ENCODE measurements at regions of chr18 and their contacts with region 1.

Region 1: GRCh38 chr18:3541549-3542386 is 91.8 kb downstream of the TGIF1 start:
- DNase-seq: no peak
- H3K4me3 Mint-ChIP-seq: peak overlapping the region; percentile 34
- H3K27ac Mint-ChIP-seq: peak overlapping the region; percentile 77
- H3K4me1 Mint-ChIP-seq: peaks cover 12% of the 10 kb centered on the region
- H3K27me3 Mint-ChIP-seq: peaks cover 10% of the 10 kb centered on the region

Region 2: GRCh38 chr18:3261371-3262246 is 280.2 kb before region 1 on chr18 and contains the start of gene MYL12B:
- intact Hi-C with region 1: loop called (anchors 5 kb)
- DNase-seq: peak; percentile 75
- H3K4me3 Mint-ChIP-seq: peak within 1 kb of the TSS; percentile 93
- H3K27ac Mint-ChIP-seq: peak within 1 kb of the TSS; percentile 98
- H3K4me1 Mint-ChIP-seq: peaks cover 82% of the 10 kb centered on the region
- H3K27me3 Mint-ChIP-seq: no peaks in the 10 kb centered on the region
- total RNA-seq, gene MYL12B: 234 and 235 TPM in 2 replicates

Region 3: GRCh38 chr18:3297025-3297984 is 244.5 kb before region 1 on chr18:
- intact Hi-C with region 1: loop called (anchors 5 kb)
- DNase-seq: peak; percentile 89
- H3K4me3 Mint-ChIP-seq: peak overlapping the region; percentile 91
- H3K27ac Mint-ChIP-seq: peak overlapping the region; percentile 82
- H3K4me1 Mint-ChIP-seq: peaks cover 15% of the 10 kb centered on the region
- H3K27me3 Mint-ChIP-seq: peaks cover 33% of the 10 kb centered on the region

Region 4: DNA sequence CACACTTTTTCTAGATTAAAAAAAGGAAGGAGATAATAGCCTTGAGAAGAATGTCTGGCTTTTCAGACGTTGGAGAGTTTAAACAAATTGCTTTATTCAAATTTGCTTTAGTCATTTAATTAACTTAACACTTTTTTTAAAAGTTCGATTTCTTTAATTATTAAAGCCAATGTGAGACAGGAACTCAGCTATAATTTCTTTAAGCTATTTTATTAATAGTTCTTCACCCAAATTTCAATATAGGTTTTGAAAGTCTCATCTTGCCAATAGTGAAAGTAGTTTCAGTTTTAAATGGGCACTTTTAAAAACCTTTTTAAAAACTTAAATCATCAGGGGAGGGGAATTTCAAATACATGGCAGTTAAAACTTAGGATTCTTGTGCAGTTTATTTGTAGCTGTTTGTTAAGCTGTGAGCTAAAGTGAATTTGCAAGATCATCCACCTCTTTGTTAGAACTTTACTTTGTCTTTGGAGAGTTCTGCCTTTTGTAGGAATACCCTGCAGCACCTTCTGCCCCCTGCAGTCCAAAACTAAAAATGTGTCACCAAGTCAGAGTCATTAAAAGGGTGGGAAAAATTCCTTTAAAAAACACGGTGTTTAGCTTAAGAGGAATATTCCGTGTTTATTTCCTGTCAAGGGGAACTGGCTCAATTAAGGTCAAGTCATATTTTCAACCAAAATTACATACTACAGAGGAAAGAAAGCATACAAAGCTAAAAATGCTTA is 87.2 kb before region 1 on chr18:
- intact Hi-C with region 1: loop called (anchors 1 kb)
- DNase-seq: no peak
- H3K4me3 Mint-ChIP-seq: peak overlapping the region; percentile 90
- H3K27ac Mint-ChIP-seq: peak overlapping the region; percentile 99
- H3K4me1 Mint-ChIP-seq: peaks cover 71% of the 10 kb centered on the region
- H3K27me3 Mint-ChIP-seq: peaks cover 2% of the 10 kb centered on the region

Region 5: DNA sequence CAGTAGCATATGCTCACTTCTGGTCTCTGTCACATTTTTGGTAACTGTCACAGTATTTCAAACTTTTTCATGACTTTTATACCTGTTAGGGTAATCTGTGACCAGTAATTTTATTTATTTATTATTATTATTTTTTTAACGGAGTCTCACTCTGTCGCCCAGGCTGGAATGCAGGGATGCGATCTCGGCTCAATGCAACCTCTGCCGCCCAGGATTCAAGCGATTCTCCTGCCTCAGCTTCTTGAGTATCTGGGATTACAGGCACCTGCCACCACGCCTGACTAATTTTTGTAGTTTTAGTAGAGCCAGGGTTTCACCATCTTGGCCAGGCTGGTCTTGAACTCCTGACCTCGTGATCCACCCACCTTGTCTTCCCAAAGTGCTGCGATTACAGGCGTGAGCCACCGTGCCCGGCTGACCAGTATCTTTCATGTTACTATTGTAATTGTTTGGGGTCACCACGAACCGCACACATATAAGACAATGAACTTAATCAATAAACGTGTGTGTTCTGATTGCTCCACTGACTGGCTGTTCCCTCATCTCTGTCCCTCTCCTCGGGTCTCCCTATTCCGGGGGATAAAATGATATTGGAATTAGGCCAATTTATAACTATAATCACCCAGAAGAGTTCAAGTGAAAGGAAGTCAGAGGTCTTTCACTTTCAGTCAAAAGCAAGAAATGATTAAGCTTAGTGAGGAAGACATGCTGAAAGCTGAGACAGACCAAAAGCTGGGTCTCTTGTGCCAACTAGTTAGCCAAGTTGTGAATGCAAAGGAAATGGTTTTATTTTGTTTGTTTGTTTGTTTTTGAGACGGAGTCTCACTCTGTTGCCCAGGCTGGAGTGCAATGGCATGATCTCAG is 68.9 kb before region 1 on chr18:
- intact Hi-C with region 1: no loop called
- DNase-seq: no peak
- H3K4me3 Mint-ChIP-seq: no peak overlapping the region
- H3K27ac Mint-ChIP-seq: no peak overlapping the region
- H3K4me1 Mint-ChIP-seq: peaks cover 12% of the 10 kb centered on the region
- H3K27me3 Mint-ChIP-seq: no peaks in the 10 kb centered on the region

Region 6: GRCh38 chr18:3525870-3526420 is 15.8 kb before region 1 on chr18:
- intact Hi-C with region 1: loop called (anchors 2 kb)
- DNase-seq: peak; percentile 17
- H3K4me3 Mint-ChIP-seq: no peak overlapping the region
- H3K27ac Mint-ChIP-seq: peak overlapping the region; percentile 49
- H3K4me1 Mint-ChIP-seq: peaks cover 14% of the 10 kb centered on the region
- H3K27me3 Mint-ChIP-seq: no peaks in the 10 kb centered on the region

Region 7: DNA sequence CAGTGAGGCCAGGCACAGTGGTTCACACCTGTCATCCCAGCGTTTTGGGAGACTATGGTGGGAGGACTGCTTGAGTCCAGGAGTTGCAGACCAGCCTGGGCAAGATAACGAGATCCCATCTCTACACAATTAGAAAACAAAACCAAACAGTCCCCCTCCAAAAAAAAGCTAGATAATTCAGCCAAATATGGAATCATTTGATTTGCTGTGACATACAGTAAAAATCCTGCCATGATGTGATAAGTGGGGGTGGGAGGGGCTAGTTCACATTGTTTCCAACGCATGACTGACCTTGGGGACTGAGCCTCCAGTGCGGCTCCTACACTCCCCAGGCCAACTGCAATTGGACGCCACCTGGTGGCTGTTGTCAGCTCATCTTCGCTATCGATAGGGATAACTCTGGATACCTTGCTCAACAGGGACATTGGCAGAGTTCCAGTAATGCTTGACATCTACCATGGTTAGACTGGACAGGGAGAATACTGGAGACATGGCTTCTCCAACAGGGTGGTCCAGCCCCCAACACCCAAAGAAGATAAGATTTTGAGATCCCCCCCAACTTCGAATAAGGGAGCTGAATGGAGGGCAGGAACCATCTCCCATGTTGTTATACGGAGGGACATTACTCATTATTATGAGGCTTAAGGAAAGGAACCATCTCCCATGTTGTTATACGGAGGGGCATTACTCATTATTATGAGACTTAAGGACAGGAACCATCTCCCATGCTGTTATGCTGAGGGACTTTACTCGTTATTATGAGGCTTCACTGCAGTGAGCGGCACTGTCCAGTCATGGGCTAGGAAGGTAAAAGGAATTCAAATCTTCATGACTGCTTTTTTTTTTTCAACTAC is 44.1 kb after region 1 on chr18:
- intact Hi-C with region 1: loop called (anchors 1 kb)
- DNase-seq: peak; percentile 54
- H3K4me3 Mint-ChIP-seq: no peak overlapping the region
- H3K27ac Mint-ChIP-seq: peak overlapping the region; percentile 69
- H3K4me1 Mint-ChIP-seq: peaks cover 46% of the 10 kb centered on the region
- H3K27me3 Mint-ChIP-seq: peaks cover 3% of the 10 kb centered on the region

Region 8: DNA sequence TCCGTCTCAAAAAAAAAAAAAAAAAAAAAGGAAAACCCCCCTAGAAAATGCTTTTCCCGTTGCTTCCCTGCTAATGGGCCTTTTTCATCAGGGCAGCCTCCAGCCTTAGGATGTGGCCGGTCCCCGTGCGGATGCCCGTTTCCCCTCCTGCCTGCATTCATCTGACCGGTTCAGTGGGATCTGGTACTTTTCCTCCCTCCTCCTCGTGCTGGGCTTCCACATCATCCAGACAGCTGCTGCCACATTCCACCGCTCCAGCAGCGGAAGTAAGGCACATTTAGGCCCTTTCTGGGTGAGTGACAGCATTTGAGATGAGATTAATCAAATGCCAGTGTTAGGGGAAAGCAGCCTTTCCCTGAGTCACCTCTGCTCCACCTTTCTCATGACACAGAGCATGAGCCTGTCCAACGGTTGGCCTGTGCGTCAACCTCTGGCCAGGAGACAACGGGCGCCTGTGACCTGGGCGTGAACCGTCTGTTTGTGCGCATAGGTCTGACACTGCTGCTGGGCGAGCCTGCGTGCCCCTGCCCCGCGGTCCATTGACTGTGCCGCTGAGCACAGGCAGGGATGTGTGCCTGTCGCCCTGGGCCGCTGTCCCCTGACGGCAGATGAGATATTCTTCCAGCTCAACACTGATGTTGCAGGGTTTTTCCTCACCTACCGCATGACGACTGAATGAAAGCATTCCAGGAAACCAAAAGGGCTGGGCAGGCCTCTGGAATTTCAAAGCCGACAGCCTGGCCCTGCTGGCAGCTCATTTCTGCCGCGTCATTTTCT is 82.2 kb after region 1 on chr18:
- intact Hi-C with region 1: loop called (anchors 1 kb)
- DNase-seq: no peak
- H3K4me3 Mint-ChIP-seq: peak overlapping the region; percentile 47
- H3K27ac Mint-ChIP-seq: peak overlapping the region; percentile 90
- H3K4me1 Mint-ChIP-seq: peaks cover 42% of the 10 kb centered on the region
- H3K27me3 Mint-ChIP-seq: peaks cover 2% of the 10 kb centered on the region